GM12878 (cell line): ENCODE measurements at regions of chr14 and their contacts with region 1.

Region 1: DNA sequence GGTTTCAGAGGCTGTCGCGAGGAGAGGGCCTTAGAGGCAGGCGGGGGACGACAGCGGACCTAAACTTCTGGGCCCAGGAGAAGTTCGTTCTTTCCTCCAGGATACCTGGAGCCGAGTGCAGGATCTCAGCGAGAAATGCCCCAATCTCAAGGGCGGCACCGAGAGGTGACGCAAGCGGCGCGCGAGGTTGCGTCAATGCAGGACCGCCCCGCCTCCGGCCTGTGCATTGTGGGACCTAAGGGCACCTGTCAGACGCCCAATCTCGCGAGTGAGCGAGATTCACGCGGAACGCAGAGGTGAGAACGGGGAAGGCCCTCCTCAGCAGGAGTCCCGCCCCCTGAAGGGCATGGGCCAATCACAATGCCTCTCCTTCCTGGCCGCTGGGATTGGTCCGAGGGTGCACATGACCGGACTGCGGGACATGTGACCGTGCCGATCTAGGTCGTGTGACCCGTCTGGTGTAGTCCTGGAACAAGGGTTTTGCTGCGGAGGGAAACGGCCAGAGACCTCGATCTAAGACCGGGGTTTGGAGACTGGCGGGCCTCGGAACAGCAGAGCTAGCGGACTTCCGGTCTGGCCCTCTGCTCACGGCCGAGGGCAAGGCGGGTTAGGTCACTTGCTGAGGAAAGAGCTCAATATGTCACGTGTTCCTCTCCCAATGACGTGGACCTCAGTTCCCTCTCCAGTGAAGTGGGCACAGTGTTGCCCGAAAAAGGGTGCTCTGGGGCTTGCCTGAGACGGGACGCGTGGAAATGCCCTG is 16.3 kb upstream of the DYNC1H1 start:
- DNase-seq: peak; percentile 100
- ATAC-seq: peak; percentile 99
- H3K4me3 ChIP-seq: peak overlapping the region; percentile 99
- H3K27ac ChIP-seq: peak overlapping the region; percentile 83
- H3K4me1 ChIP-seq: peaks cover 2% of the 10 kb centered on the region; the same call in 1 of the 2 replicates
- H3K27me3 ChIP-seq: no peaks in the 10 kb centered on the region
- CTCF ChIP-seq: no peak; a peak in 1 of 6 replicates
- EP300 ChIP-seq: 0 out of 4 replicates have a peak, but pooled peaks of 1 of the 2 experiments have one; percentile 32
- POLR2A ChIP-seq: peak; percentile 91
- RAD21 ChIP-seq: no peak

Region 2: GRCh38 chr14:101707068-101707842 is 240.8 kb before region 1 on chr14:
- CTCF ChIA-PET with region 1: interaction called, 9 read pairs
- POLR2A ChIA-PET with region 1: no interaction called
- RAD21 ChIA-PET with region 1: interaction called, 7 read pairs
- SMC1A ChIA-PET with region 1: interaction called, 4 read pairs
- in situ Hi-C with region 1: no loop called
- intact Hi-C with region 1: loop called (anchors 5 kb)
- DNase-seq: peak; percentile 53
- ATAC-seq: peak; percentile 78
- H3K4me3 ChIP-seq: no peak overlapping the region
- H3K27ac ChIP-seq: no peak overlapping the region
- H3K4me1 ChIP-seq: peaks cover 14% of the 10 kb centered on the region
- H3K27me3 ChIP-seq: no peaks in the 10 kb centered on the region; a peak in 2 of 4 replicates
- CTCF ChIP-seq: peak; percentile 65 to 87 (median 80)
- EP300 ChIP-seq: no peak
- POLR2A ChIP-seq: no peak
- RAD21 ChIP-seq: peak; percentile 92

Region 3: GRCh38 chr14:101761032-101761880 is 186.8 kb before region 1 on chr14 and contains the start of gene PPP2R5C:
- CTCF ChIA-PET with region 1: interaction called, 3 read pairs
- POLR2A ChIA-PET with region 1: interaction called, 3 read pairs
- RAD21 ChIA-PET with region 1: no interaction called
- SMC1A ChIA-PET with region 1: interaction called, 4 read pairs
- in situ Hi-C with region 1: no loop called
- intact Hi-C with region 1: loop called (anchors 2 kb)
- DNase-seq: no peak
- ATAC-seq: peak; percentile 93
- H3K4me3 ChIP-seq: peak within 1 kb of the TSS; percentile 84
- H3K27ac ChIP-seq: 0 out of 2 replicates have a peak within 1 kb of the TSS, but pooled peaks have one; percentile 37
- H3K4me1 ChIP-seq: no peaks in the 10 kb centered on the region
- H3K27me3 ChIP-seq: no peaks in the 10 kb centered on the region; a peak in 2 of 4 replicates
- CTCF ChIP-seq: no peak
- EP300 ChIP-seq: no peak
- POLR2A ChIP-seq: peak; percentile 67; the same call in 1 of the 2 replicates
- RAD21 ChIP-seq: no peak
- polyA plus RNA-seq, gene PPP2R5C: 190 to 199 TPM

Region 4: GRCh38 chr14:101774006-101774795 is 173.9 kb before region 1 on chr14:
- CTCF ChIA-PET with region 1: interaction called, 80 read pairs
- POLR2A ChIA-PET with region 1: no interaction called
- RAD21 ChIA-PET with region 1: interaction called, 11 read pairs
- SMC1A ChIA-PET with region 1: interaction called, 16 read pairs
- in situ Hi-C with region 1: no loop called
- intact Hi-C with region 1: no loop called
- DNase-seq: no peak
- ATAC-seq: no peak; the same call in 2 of the 3 replicates
- H3K4me3 ChIP-seq: no peak overlapping the region
- H3K27ac ChIP-seq: no peak overlapping the region
- H3K4me1 ChIP-seq: peaks cover 19% of the 10 kb centered on the region
- H3K27me3 ChIP-seq: no peaks in the 10 kb centered on the region
- CTCF ChIP-seq: no peak
- EP300 ChIP-seq: no peak
- POLR2A ChIP-seq: no peak
- RAD21 ChIP-seq: no peak